ENCODE measurements at regions of chr20 and their contacts with region 1.

Region 1: DNA sequence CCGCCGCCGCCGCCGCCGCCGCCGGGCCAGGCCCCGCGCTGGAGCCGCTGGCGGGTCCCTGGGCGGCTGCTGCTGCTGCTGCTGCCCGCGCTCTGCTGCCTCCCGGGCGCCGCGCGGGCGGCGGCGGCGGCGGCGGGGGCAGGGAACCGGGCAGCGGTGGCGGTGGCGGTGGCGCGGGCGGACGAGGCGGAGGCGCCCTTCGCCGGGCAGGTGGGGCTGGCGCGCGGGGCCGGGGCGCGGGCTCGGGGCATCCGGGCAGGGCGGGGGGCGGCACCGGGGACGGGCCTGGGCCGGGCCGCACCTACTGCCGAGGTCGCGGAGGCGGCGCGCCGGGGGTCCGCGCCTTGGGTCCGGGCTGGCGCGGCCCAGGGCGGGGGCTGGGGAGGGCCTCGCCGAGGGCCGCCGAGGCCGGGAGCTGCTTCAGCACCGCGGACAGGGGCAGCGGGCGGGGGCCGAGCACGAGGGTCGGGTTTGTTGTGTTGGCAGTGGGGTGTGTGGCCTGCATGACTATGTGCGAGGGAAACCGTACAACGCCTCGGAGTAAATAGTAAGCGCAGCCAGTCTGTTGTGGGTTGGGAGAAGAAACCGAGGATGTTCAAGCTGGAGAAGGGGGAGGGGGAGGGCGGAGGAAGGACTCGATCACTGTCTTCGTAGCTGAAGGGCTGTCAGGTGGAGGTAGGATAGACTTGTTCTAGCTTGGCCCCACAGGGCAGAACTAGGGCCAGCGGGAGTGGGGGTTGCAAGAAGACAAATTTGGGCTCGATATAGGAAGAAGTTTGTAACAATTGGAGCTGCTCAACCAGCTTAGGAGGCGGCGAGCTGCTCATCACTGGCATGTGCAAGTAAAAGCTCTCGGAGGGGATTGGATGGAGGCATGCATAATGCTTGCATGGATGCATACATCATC is 538 bp downstream of the MMP24 start:
- DNase-seq: peak; percentile 13 to 60 (median 41)
- ATAC-seq: peak; percentile 88
- H3K4me3 ChIP-seq: no peak overlapping the region
- H3K4me3 Mint-ChIP-seq: peak overlapping the region; percentile 78
- H3K27ac ChIP-seq: no peak overlapping the region
- H3K27ac Mint-ChIP-seq: no peak overlapping the region
- H3K4me1 ChIP-seq: peaks cover 3% of the 10 kb centered on the region
- H3K4me1 Mint-ChIP-seq: peaks cover 11% of the 10 kb centered on the region
- H3K27me3 ChIP-seq: peaks cover 8 to 10% of the 10 kb centered on the region in 2 experiments
- H3K27me3 Mint-ChIP-seq: peaks cover 39% of the 10 kb centered on the region
- CTCF ChIP-seq: no peak

Region 2: GRCh38 chr20:35363190-35363589 is 136.2 kb after region 1 on chr20:
- CTCF ChIA-PET with region 1: no interaction called
- POLR2A ChIA-PET with region 1: no interaction called
- intact Hi-C with region 1: no loop called
- DNase-seq: no peak
- ATAC-seq: no peak
- H3K4me3 ChIP-seq: no peak overlapping the region
- H3K4me3 Mint-ChIP-seq: no peak overlapping the region
- H3K27ac ChIP-seq: no peak overlapping the region
- H3K27ac Mint-ChIP-seq: no peak overlapping the region
- H3K4me1 ChIP-seq: no peaks in the 10 kb centered on the region
- H3K4me1 Mint-ChIP-seq: peaks cover 4% of the 10 kb centered on the region
- H3K27me3 ChIP-seq: no peaks in the 10 kb centered on the region
- H3K27me3 Mint-ChIP-seq: no peaks in the 10 kb centered on the region
- CTCF ChIP-seq: no peak

Region 3: GRCh38 chr20:36064658-36065426 is 837.8 kb after region 1 on chr20:
- CTCF ChIA-PET with region 1: no interaction called
- POLR2A ChIA-PET with region 1: no interaction called
- intact Hi-C with region 1: loop called in 1 of 2 experiments (anchors 10 kb)
- DNase-seq: peak; percentile 85 to 97 (median 93)
- ATAC-seq: peak; percentile 97
- H3K4me3 ChIP-seq: peak overlapping the region; percentile 66 to 74
- H3K4me3 Mint-ChIP-seq: peak overlapping the region; percentile 92
- H3K27ac ChIP-seq: peak overlapping the region; percentile 44 to 48
- H3K27ac Mint-ChIP-seq: peak overlapping the region; percentile 70
- H3K4me1 ChIP-seq: peaks cover 12% of the 10 kb centered on the region
- H3K4me1 Mint-ChIP-seq: peaks cover 5% of the 10 kb centered on the region
- H3K27me3 ChIP-seq: no peaks in the 10 kb centered on the region
- H3K27me3 Mint-ChIP-seq: peaks cover 6% of the 10 kb centered on the region
- CTCF ChIP-seq: no peak